Mammary epithelial cell (primary cell): ENCODE measurements at regions of chr1 and their contacts with region 1.

Region 1: DNA sequence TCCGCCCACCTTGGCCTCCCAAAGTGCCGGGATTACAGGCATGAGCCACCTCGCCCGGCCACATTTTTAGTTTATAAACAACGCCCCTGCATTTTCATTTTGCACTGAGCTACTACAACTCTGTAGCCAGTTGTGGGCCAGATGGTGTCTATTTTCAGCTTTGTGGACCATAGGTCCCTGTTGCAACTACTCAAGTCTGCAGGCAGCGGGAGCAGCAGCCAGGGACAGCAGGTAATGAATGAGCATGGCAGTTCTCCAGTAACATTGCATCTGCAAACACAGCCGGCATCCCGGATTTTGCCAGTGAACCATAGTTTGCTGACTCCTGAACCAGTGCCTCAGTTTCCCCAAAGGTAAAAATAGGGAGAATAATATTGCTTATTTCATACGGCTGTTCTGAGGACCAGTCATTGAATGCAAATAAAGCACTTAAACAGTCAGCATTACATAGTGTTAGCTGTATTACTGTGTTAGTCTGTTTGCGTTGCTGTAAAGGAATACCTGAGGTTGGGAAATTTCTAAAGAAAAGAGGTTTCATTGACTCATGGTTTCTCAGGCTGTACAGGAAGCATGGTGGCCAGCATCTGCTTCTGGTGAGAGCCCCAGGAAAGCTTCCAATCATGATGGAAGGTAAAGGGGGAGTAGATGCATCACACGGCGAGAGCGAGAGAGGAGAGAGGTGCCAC is 65.5 kb upstream of the SLC45A1 start:
- DNase-seq: no peak
- H3K4me3 ChIP-seq: no peak overlapping the region
- H3K27ac ChIP-seq: no peak overlapping the region
- H3K4me1 ChIP-seq: peaks cover 3% of the 10 kb centered on the region
- H3K27me3 ChIP-seq: no peaks in the 10 kb centered on the region
- CTCF ChIP-seq: no peak

Region 2: GRCh38 chr1:8302081-8302956 is 49.9 kb after region 1 on chr1:
- CTCF ChIA-PET with region 1: no interaction called
- dilution Hi-C with region 1: loop called (anchors 5 kb)
- in situ Hi-C with region 1: no loop called
- intact Hi-C with region 1: no loop called
- DNase-seq: no peak
- H3K4me3 ChIP-seq: no peak overlapping the region
- H3K27ac ChIP-seq: no peak overlapping the region
- H3K4me1 ChIP-seq: no peaks in the 10 kb centered on the region
- H3K27me3 ChIP-seq: no peaks in the 10 kb centered on the region
- CTCF ChIP-seq: no peak

Region 3: DNA sequence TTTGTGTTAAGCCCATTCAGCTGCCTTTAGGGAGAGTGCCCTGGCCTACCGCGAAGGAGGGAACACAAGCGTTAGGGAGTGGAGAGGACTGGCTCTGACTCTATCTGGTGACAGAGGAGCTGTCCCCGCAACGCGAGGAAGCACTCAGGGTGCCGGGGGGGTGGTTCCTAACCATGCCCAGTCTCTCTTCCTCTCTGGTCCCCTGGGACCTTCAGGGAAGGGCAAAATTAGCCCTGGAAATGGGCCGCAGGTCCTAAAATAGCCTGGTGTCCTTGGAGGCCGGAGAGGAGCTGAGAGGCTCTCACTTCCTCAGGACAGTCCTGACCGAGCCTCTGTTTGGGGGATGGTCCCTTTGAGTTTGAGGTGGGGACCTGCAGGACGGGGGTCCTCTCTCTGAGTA is 71.3 kb after region 1 on chr1:
- CTCF ChIA-PET with region 1: no interaction called
- dilution Hi-C with region 1: no loop called
- in situ Hi-C with region 1: no loop called
- intact Hi-C with region 1: no loop called
- DNase-seq: no peak
- H3K4me3 ChIP-seq: no peak overlapping the region
- H3K27ac ChIP-seq: no peak overlapping the region
- H3K4me1 ChIP-seq: no peaks in the 10 kb centered on the region
- H3K27me3 ChIP-seq: no peaks in the 10 kb centered on the region
- CTCF ChIP-seq: no peak